ENCODE measurements at regions of chr16 and their contacts with region 1.

Region 1: DNA sequence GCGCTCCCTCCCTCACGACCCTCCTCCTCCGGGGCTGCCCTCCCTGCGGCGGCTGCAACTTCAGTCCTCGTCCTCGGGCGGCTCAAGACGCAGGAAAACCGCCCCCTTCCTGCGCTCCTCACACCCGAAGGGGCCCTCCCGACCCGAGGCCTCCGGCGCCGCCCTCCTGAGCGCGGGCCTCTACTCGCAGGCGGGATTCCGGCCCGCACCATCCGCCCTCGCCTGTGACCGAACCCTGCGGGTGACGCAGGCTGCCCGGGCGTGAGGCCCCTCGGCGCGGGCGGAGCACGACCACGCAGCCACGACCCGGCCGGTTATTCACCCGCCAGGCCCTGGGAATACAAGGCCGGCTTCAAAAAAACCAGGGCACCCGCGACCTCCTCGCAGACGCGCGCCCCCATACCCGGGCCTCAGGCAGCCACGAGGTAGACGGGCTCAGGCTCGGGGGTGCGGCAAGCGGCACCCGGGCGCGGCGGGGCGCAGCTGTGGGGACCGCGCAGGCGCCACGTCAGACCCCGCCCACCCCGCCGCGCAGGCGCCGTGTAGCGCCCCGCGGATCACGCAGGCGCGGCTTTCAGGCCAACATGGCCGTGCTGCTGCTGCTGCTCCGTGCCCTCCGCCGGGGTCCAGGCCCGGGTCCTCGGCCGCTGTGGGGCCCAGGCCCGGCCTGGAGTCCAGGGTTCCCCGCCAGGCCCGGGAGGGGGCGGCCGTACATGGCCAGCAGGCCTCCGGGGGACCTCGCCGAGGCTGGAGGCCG is at the start of gene SPG7:
- DNase-seq: peak; percentile 82 to 98 (median 95)
- ATAC-seq: peak; percentile 83
- H3K4me3 ChIP-seq: peak within 1 kb of the TSS; percentile 64
- H3K4me3 Mint-ChIP-seq: peak within 1 kb of the TSS; percentile 82 to 96 (median 95)
- H3K27ac ChIP-seq: peak within 1 kb of the TSS; percentile 86
- H3K27ac Mint-ChIP-seq: peak within 1 kb of the TSS; percentile 87 to 97 (median 94)
- H3K4me1 ChIP-seq: peaks cover 30 to 33% of the 10 kb centered on the region in 2 donors
- H3K4me1 Mint-ChIP-seq: peaks cover 14 to 46% (median 31%) of the 10 kb centered on the region in 7 donors
- H3K27me3 ChIP-seq: no peaks in the 10 kb centered on the region
- H3K27me3 Mint-ChIP-seq: no peaks in the 10 kb centered on the region
- total RNA-seq, gene SPG7: 129 to 181 (median 170) TPM

Region 2: GRCh38 chr16:89241187-89242007 is 266.6 kb before region 1 on chr16:
- CTCF ChIA-PET with region 1: interaction called, 5 read pairs
- POLR2A ChIA-PET with region 1: interaction called, 4 read pairs
- intact Hi-C with region 1: loop called (anchors 1 to 2 kb)
- DNase-seq: peak; percentile 75 to 95 (median 93)
- ATAC-seq: peak; percentile 86
- H3K4me3 ChIP-seq: peak overlapping the region; percentile 68
- H3K4me3 Mint-ChIP-seq: peak overlapping the region; percentile 83 to 100 (median 96)
- H3K27ac ChIP-seq: peak overlapping the region; percentile 91
- H3K27ac Mint-ChIP-seq: peak overlapping the region; percentile 94 to 100 (median 99)
- H3K4me1 ChIP-seq: peaks cover 5 to 6% of the 10 kb centered on the region in 2 donors
- H3K4me1 Mint-ChIP-seq: peaks cover 0 to 31% (median 18%) of the 10 kb centered on the region in 7 donors
- H3K27me3 ChIP-seq: no peaks in the 10 kb centered on the region
- H3K27me3 Mint-ChIP-seq: no peaks in the 10 kb centered on the region

Region 3: GRCh38 chr16:89334988-89335802 is 172.8 kb before region 1 on chr16:
- CTCF ChIA-PET with region 1: interaction called, 13 read pairs
- POLR2A ChIA-PET with region 1: interaction called, 5 read pairs
- intact Hi-C with region 1: loop called (anchors 1 kb)
- DNase-seq: no peak
- ATAC-seq: no peak
- H3K4me3 ChIP-seq: no peak overlapping the region
- H3K4me3 Mint-ChIP-seq: peak overlapping the region in 7 of 10 donors; percentile 28 to 75 (median 57)
- H3K27ac ChIP-seq: peak overlapping the region; percentile 32
- H3K27ac Mint-ChIP-seq: peak overlapping the region in 8 of 9 donors; percentile 13 to 90 (median 68)
- H3K4me1 ChIP-seq: peaks cover 42 to 64% of the 10 kb centered on the region in 2 donors
- H3K4me1 Mint-ChIP-seq: peaks cover 57 to 87% (median 74%) of the 10 kb centered on the region in 7 donors
- H3K27me3 ChIP-seq: no peaks in the 10 kb centered on the region
- H3K27me3 Mint-ChIP-seq: no peaks in the 10 kb centered on the region

Region 4: GRCh38 chr16:89490387-89491237 is 17.4 kb before region 1 on chr16 and contains the start of gene ANKRD11:
- CTCF ChIA-PET with region 1: interaction called, 3 read pairs
- POLR2A ChIA-PET with region 1: interaction called, 68 read pairs
- intact Hi-C with region 1: loop called (anchors 1 kb)
- DNase-seq: peak; percentile 99 to 100 (median 99)
- ATAC-seq: peak; percentile 93
- H3K4me3 ChIP-seq: peak within 1 kb of the TSS; percentile 92
- H3K4me3 Mint-ChIP-seq: peak within 1 kb of the TSS; percentile 89 to 98 (median 94)
- H3K27ac ChIP-seq: peak within 1 kb of the TSS; percentile 90
- H3K27ac Mint-ChIP-seq: peak within 1 kb of the TSS; percentile 92 to 99 (median 97)
- H3K4me1 ChIP-seq: peaks cover 44 to 48% of the 10 kb centered on the region in 2 donors
- H3K4me1 Mint-ChIP-seq: peaks cover 48 to 73% (median 53%) of the 10 kb centered on the region in 7 donors
- H3K27me3 ChIP-seq: no peaks in the 10 kb centered on the region
- H3K27me3 Mint-ChIP-seq: peaks cover 0 to 2% (median 0%) of the 10 kb centered on the region in 5 donors
- total RNA-seq, gene ANKRD11: 178 to 254 (median 240) TPM

Region 5: GRCh38 chr16:89657442-89658220 is 149.6 kb after region 1 on chr16 and contains the starts of genes CHMP1A and SPATA33:
- CTCF ChIA-PET with region 1: no interaction called
- POLR2A ChIA-PET with region 1: no interaction called
- intact Hi-C with region 1: loop called in 1 of 2 experiments (anchors 5 kb)
- DNase-seq: peak; percentile 87 to 98 (median 94)
- ATAC-seq: peak; percentile 95
- H3K4me3 ChIP-seq: peak within 1 kb of the TSS; percentile 88
- H3K4me3 Mint-ChIP-seq: peak within 1 kb of the TSS; percentile 82 to 93 (median 86)
- H3K27ac ChIP-seq: peak within 1 kb of the TSS; percentile 85
- H3K27ac Mint-ChIP-seq: peak within 1 kb of the TSS; percentile 71 to 89 (median 85)
- H3K4me1 ChIP-seq: peaks cover 6 to 16% of the 10 kb centered on the region in 2 donors
- H3K4me1 Mint-ChIP-seq: peaks cover 17 to 44% (median 36%) of the 10 kb centered on the region in 7 donors
- H3K27me3 ChIP-seq: no peaks in the 10 kb centered on the region
- H3K27me3 Mint-ChIP-seq: no peaks in the 10 kb centered on the region
- total RNA-seq, gene CHMP1A: 64.4 to 99.0 (median 65.9) TPM
- total RNA-seq, gene SPATA33: 6.4 to 17.0 (median 7.9) TPM